Activated CD4-positive, alpha-beta T cell treated with anti-CD3 and anti-CD28 coated beads for 36 hours (primary cell): ENCODE measurements at regions of chr2 and their contacts with region 1.

Region 1: DNA sequence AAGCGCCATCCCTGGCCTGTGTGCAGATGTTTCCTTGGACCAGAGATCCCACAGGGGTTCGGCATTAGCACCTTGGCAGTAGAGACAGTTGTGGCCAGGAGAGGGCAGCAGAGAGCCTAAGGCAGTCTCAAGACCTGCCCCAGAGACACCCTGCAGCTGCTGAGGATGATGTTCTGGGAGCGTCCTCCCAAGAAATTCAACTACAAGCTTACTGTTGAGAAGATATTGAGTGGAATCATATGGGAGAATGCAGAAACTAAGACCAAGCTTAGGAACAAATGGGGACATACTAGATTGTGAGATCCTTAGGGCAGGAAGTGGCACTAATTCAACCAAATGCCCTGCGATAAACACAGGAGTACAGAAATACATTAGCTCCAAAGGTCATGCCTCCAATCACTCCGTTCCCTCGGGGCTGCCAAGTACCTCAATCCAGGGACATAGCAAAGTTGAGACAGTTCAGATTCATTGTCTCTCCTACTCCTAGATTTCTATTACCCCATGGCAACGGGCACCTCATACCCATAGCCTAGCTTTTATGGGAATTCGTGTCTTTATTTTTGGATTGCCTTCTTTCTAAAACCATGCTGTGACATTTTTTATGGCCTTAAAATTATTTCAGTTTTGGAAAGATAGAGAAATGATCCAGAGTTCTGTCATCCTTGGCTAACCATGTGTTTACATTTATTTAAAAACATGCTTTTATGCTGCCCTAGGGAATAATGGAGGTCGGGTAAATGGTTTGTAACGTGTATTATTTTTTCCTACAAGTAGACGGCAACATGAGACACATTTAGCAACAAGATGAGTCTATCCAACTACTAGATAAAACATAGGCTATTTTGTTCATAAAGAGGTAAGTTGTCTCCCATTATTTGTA is 2.2 kb upstream of the ERMN start:
- DNase-seq: peak; percentile 95
- ATAC-seq: peak; percentile 91
- H3K4me3 Mint-ChIP-seq: peak overlapping the region; percentile 29
- H3K27ac Mint-ChIP-seq: peak overlapping the region; percentile 72
- H3K4me1 Mint-ChIP-seq: peaks cover 61% of the 10 kb centered on the region
- H3K27me3 Mint-ChIP-seq: no peaks in the 10 kb centered on the region

Region 2: GRCh38 chr2:157312866-157313486 is 14.9 kb before region 1 on chr2:
- CTCF ChIA-PET with region 1: interaction called, 189 read pairs
- POLR2A ChIA-PET with region 1: no interaction called
- intact Hi-C with region 1: loop called in 1 of 2 experiments (anchors 2 kb)
- DNase-seq: no peak
- ATAC-seq: peak; percentile 84
- H3K4me3 Mint-ChIP-seq: no peak overlapping the region
- H3K27ac Mint-ChIP-seq: no peak overlapping the region
- H3K4me1 Mint-ChIP-seq: peaks cover 49% of the 10 kb centered on the region
- H3K27me3 Mint-ChIP-seq: no peaks in the 10 kb centered on the region

Region 3: GRCh38 chr2:157404363-157404762 is 76.5 kb after region 1 on chr2:
- CTCF ChIA-PET with region 1: interaction called, 11 read pairs
- POLR2A ChIA-PET with region 1: interaction called, 3 read pairs
- intact Hi-C with region 1: no loop called
- DNase-seq: peak; percentile 72
- ATAC-seq: peak; percentile 95
- H3K4me3 Mint-ChIP-seq: peak overlapping the region; percentile 0
- H3K27ac Mint-ChIP-seq: peak overlapping the region; percentile 80
- H3K4me1 Mint-ChIP-seq: peaks cover 75% of the 10 kb centered on the region
- H3K27me3 Mint-ChIP-seq: no peaks in the 10 kb centered on the region

Region 4: GRCh38 chr2:157420771-157421323 is 93.0 kb after region 1 on chr2:
- CTCF ChIA-PET with region 1: interaction called, 42 read pairs
- POLR2A ChIA-PET with region 1: interaction called, 6 read pairs
- intact Hi-C with region 1: no loop called
- DNase-seq: peak; percentile 60
- ATAC-seq: peak; percentile 57
- H3K4me3 Mint-ChIP-seq: peak overlapping the region; percentile 52
- H3K27ac Mint-ChIP-seq: peak overlapping the region; percentile 93
- H3K4me1 Mint-ChIP-seq: peaks cover 78% of the 10 kb centered on the region
- H3K27me3 Mint-ChIP-seq: no peaks in the 10 kb centered on the region

Region 5: DNA sequence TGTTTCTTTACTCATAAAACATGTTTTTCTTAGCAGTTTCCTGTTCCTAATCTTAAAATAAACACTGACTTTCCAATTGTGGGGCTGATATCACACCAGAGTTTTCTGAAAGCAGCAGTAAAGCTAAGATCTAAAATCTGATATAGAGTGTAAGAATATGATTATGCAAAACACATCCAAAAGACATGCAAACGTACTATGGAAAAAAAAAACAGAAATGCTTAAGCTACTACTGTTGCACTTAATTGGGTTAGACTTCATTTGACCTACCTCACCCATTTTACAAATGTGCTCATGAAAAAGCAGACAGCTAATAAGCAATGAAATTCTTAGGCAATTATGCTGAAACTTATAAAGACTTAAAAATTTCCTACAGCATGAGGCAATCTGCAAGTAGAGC is 105.5 kb after region 1 on chr2:
- CTCF ChIA-PET with region 1: interaction called, 55 read pairs
- POLR2A ChIA-PET with region 1: interaction called, 10 read pairs
- intact Hi-C with region 1: loop called in 1 of 2 experiments (anchors 2 kb)
- DNase-seq: no peak
- ATAC-seq: no peak
- H3K4me3 Mint-ChIP-seq: peak overlapping the region; percentile 93
- H3K27ac Mint-ChIP-seq: peak overlapping the region; percentile 95
- H3K4me1 Mint-ChIP-seq: peaks cover 60% of the 10 kb centered on the region
- H3K27me3 Mint-ChIP-seq: no peaks in the 10 kb centered on the region

Region 6: DNA sequence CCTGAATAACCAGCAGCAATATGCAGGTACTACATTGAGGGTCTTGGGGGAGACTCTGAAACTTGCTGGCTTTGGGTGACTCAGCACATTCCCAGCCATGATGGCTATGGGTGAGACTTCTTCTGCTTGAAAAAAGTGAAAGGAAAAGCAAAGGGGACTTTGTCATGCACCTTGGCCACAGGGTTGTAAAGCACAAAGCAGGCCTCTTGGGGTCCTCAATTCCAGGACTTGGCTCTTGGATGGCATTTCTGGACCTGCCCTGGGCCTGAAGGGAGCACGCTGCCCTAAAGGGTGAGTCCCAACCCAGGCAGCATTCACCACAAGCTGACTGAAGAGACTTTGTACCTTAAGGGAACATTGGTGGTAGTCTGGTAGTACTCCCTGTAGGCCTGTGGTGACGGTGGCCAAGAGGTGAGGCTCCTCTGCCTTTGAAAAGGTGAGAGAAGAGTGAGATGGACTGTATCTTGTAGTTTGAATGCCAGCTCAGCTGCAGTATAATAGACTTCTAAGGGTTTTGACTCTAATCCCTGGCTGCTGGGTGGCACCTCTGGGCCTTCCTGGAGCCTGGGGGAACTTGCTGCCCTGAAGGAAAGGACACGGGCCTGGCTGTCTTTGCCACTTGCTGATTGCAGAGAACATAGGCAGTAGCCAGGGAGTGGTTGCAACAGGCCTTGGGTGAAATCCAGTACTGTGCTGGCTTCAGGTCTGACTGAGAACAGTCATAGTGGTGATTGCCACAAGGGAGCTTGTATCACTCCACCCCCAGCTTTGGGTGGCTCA is 152.5 kb after region 1 on chr2:
- CTCF ChIA-PET with region 1: interaction called, 18 read pairs
- POLR2A ChIA-PET with region 1: interaction called, 5 read pairs
- intact Hi-C with region 1: loop called (anchors 2 to 5 kb)
- DNase-seq: peak; percentile 81
- ATAC-seq: peak; percentile 71
- H3K4me3 Mint-ChIP-seq: peak overlapping the region; percentile 64
- H3K27ac Mint-ChIP-seq: peak overlapping the region; percentile 95
- H3K4me1 Mint-ChIP-seq: peaks cover 86% of the 10 kb centered on the region
- H3K27me3 Mint-ChIP-seq: no peaks in the 10 kb centered on the region

Region 7: DNA sequence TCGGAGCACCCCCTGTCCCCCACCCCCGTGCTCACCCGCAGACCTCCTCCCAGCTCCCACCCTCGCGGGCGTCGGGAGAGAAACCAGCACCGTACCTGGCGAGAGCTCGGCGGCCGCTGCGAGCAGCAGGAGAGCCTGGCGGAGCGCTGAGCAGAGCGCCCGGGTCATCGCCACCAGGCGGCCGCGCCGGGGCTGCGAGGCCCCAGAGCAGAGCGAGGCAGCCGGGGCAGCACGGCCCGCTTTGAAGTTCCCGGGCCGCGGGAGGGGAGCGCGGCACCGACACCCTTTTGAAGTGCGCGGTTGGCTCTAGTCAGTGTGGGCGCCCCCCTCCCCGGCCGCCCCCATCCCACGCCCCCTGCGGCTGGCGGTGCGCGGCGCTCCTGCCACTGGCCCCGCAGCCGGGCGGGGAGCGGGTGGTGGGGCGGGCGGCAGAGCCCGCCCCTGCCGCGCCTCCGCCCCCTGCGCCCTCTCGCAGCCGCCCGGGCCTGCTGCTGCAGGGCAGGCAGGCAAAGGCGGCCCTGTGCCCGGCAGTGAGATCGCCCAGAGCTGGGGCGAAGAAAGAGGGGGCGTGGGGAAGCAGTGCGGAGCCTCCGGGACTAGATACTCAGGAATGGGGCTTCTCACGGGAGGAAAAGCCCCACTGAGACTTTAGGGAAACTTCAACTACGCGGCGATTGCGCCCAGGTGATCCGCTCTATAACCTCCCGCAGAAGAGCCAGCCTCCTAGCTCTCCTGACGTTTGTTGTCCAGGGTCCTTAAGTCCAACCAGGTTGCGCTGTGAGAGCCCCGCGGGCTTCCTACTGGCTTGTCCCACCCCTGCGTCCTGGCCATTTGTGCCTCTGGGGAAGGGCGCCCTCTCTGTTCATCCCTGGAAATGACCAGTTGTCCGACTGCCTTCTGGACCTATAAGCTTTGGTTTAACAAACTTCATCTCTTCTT is 300.9 kb after region 1 on chr2 and contains the start of gene ACVR1C:
- CTCF ChIA-PET with region 1: interaction called, 13 read pairs
- POLR2A ChIA-PET with region 1: no interaction called
- intact Hi-C with region 1: loop called in 1 of 2 experiments (anchors 5 kb)
- DNase-seq: peak; percentile 80
- ATAC-seq: peak; percentile 82
- H3K4me3 Mint-ChIP-seq: peak within 1 kb of the TSS; percentile 76
- H3K27ac Mint-ChIP-seq: peak within 1 kb of the TSS; percentile 23
- H3K4me1 Mint-ChIP-seq: peaks cover 34% of the 10 kb centered on the region
- H3K27me3 Mint-ChIP-seq: peaks cover 5% of the 10 kb centered on the region
- total RNA-seq, gene ACVR1C: 1.6 to 1.7 TPM